A673 (cell line): ENCODE measurements at regions of chr19 and their contacts with region 1.

Region 1: GRCh38 chr19:8505680-8506401 is 3.4 kb upstream of the PRAM1 start:
- DNase-seq: peak; percentile 85
- H3K4me3 ChIP-seq: peak overlapping the region; percentile 62
- H3K27ac ChIP-seq: peak overlapping the region; percentile 78
- H3K4me1 ChIP-seq: peaks cover 11% of the 10 kb centered on the region
- H3K27me3 ChIP-seq: no peaks in the 10 kb centered on the region
- CTCF ChIP-seq: peak; percentile 90

Region 2: DNA sequence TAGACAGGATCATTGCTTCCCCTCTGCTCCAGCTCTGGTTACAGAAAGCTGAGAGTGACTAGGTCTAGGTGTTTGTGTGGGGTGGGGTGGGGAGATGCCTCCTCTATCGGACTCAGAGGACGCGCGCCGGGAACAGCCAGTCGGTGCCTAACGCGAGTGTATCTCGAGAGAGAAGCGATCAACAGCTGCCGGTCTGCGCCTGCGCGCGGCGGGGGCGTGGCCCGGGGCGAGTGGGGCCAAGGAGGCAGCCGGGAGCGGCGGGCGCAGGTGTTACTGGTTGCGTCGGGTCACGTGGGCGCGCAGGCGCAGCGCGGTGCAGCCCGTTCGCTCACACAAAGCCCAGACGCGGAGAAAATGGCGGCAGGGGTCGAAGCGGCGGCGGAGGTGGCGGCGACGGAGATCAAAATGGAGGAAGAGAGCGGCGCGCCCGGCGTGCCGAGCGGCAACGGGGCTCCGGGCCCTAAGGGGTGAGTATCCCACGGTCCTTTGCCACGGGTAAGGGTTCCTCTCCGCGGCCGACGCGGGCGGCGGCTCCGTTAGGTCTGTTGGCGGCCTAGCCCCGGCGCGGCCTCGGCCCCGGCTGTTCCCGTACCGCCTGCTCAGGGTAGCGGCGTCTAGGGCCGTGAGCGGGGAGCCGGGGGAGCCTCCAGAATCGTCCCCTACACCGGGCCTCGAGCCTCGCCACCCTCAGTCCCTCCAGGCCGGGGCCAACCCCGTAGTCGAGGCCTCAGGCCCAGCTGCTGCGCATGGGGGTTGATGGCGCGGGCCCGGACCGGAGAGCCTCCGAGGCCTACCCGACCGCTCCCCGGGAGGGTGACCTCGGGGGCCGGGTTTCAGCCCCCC is 61.0 kb before region 1 on chr19 and contains the start of gene HNRNPM:
- CTCF ChIA-PET with region 1: interaction called, 12 read pairs
- POLR2A ChIA-PET with region 1: no interaction called
- intact Hi-C with region 1: no loop called
- DNase-seq: peak; percentile 99
- H3K4me3 ChIP-seq: peak within 1 kb of the TSS; percentile 95
- H3K27ac ChIP-seq: peak within 1 kb of the TSS; percentile 99
- H3K4me1 ChIP-seq: peaks cover 23% of the 10 kb centered on the region
- H3K27me3 ChIP-seq: no peaks in the 10 kb centered on the region
- CTCF ChIP-seq: no peak
- total RNA-seq, gene HNRNPM: 413 and 436 TPM in 2 replicates